ENCODE measurements at regions of chr12 and their contacts with region 1.

Region 1: DNA sequence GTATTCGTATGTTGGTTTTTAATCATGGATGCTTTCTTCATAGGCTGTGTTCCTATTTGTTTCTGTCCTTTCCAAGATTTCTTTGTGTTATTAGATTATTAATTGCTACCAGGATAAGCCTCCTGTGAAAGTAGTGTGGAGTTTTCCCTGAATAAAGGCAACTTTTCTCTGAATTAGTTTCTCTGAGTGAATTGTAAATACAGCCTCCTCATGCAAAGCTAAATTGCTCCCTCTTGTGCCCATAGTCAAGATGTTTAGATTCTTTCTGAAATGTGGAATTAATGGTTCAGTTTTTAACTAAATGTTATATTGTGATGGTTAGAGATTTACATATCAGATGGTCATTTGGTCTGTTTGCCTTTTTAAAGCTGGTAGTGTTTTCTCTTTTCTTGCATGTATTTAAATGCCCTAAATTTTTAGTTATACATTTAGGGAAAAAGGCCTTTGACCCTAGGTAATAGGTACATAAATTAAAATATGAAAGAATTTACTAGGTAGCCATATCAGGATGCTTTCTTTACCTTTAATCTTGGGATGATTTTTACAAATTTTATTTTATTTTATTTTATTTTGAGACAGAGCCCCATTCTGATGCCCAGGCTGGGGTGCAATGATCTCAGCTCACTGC is 8.9 kb downstream of the APAF1 start:
- DNase-seq: peak; percentile 23
- H3K4me3 ChIP-seq: no peak overlapping the region
- H3K27ac ChIP-seq: no peak overlapping the region
- H3K4me1 ChIP-seq: no peaks in the 10 kb centered on the region
- H3K27me3 ChIP-seq: no peaks in the 10 kb centered on the region
- CTCF ChIP-seq: peak; percentile 31 to 64

Region 2: DNA sequence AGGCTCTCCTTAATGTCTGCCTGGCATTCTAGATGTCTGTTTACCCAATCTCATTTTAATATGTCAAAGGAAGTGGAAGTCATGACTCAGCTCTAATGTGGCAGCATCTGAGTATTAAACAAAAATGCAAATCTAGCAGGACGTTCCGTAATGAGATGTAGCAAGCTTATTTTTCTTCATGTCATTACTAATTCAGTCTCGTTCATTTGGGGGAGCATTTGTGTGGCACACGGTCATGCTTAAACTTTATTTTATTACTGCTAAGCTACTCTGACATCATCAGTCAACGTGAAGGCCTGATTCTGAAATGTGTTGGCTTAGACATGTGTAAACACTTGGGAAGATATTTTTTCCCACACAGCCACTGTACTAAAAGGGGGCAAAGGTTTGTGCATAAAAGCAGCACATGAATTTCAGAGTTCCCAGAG is 465.3 kb before region 1 on chr12:
- CTCF ChIA-PET with region 1: no interaction called
- dilution Hi-C with region 1: no loop called
- in situ Hi-C with region 1: no loop called
- intact Hi-C with region 1: no loop called
- DNase-seq: no peak
- H3K4me3 ChIP-seq: no peak overlapping the region
- H3K27ac ChIP-seq: no peak overlapping the region
- H3K4me1 ChIP-seq: no peaks in the 10 kb centered on the region
- H3K27me3 ChIP-seq: no peaks in the 10 kb centered on the region
- CTCF ChIP-seq: no peak

Region 3: GRCh38 chr12:98572010-98572409 is 82.0 kb before region 1 on chr12:
- CTCF ChIA-PET with region 1: no interaction called
- dilution Hi-C with region 1: no loop called
- in situ Hi-C with region 1: no loop called
- intact Hi-C with region 1: loop called (anchors 1 kb)
- DNase-seq: no peak
- H3K4me3 ChIP-seq: no peak overlapping the region
- H3K27ac ChIP-seq: no peak overlapping the region
- H3K4me1 ChIP-seq: peaks cover 4% of the 10 kb centered on the region
- H3K27me3 ChIP-seq: no peaks in the 10 kb centered on the region
- CTCF ChIP-seq: peak in 1 of 2 donors; percentile 24

Region 4: DNA sequence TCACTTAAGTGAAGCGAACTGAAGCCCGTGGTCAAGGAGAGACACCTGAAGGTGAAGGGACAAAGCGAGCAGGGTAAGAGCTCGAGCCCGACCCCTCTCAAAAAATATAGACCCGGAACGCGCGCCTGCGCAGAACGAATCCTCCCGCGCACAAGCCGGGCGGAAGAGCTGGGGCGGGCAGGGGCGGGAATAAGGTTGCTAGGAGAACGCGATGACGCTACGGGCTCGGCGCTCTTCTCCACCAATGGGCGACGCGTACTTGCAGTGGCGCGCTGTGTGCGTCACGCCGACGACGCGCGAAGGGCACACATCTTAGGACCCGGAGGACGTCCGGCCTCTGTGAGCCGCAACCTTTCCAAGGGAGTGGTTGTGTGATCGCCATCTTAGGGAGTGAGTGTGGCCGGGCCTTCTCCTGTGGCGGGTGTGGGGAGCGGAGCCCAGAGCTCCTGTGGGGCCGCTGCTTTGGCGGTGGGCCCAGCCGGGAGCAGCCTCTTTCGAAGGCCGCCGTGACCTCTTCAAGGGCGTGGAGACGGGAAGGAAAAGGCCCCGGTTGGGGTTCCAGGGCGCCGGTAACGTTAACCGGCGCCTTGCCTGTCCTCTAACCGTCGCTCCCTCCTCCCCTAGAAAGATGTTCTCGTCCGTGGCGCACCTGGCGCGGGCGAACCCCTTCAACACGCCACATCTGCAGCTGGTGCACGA is 60.5 kb before region 1 on chr12 and contains the start of gene SLC25A3:
- CTCF ChIA-PET with region 1: no interaction called
- dilution Hi-C with region 1: no loop called
- in situ Hi-C with region 1: no loop called
- intact Hi-C with region 1: loop called (anchors 2 kb)
- DNase-seq: peak; percentile 96
- H3K4me3 ChIP-seq: peak within 1 kb of the TSS; percentile 93 to 100 (median 100)
- H3K27ac ChIP-seq: peak within 1 kb of the TSS; percentile 92
- H3K4me1 ChIP-seq: peaks cover 21% of the 10 kb centered on the region
- H3K27me3 ChIP-seq: no peaks in the 10 kb centered on the region
- CTCF ChIP-seq: no peak
- total RNA-seq, gene SLC25A3: 591 to 639 TPM

Region 5: DNA sequence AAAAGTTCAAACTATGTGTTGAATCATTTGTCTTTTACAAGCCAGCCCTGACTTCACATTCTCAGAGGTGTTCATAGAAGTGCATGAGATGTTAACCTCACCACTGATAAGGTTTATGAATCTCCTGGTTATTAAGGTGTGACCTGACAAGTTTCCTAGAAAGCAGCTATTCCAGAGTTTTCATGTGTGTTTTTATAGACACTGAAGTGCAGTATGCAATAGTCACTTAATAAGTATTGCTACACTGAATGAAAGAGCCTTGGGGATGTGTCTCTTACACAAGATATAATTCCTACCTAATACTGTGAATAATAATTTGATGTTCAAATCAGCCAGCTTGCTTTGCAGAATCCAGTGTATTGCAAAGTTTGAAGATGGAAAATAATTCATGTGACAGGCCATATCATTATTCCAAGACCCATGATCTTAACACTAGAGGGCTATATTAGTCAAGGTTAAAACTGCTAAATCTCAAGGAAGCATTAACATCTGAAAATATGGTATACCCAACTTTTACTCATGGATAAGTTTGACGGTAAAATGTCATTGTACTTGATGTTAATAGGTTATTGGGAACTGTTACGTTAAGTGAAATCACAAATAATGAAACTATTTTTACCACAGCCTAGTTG is 47.5 kb before region 1 on chr12:
- CTCF ChIA-PET with region 1: no interaction called
- dilution Hi-C with region 1: no loop called
- in situ Hi-C with region 1: no loop called
- intact Hi-C with region 1: loop called (anchors 1 kb)
- DNase-seq: no peak
- H3K4me3 ChIP-seq: no peak overlapping the region
- H3K27ac ChIP-seq: no peak overlapping the region
- H3K4me1 ChIP-seq: no peaks in the 10 kb centered on the region
- H3K27me3 ChIP-seq: no peaks in the 10 kb centered on the region
- CTCF ChIP-seq: peak in 1 of 2 donors; percentile 15

Region 6: DNA sequence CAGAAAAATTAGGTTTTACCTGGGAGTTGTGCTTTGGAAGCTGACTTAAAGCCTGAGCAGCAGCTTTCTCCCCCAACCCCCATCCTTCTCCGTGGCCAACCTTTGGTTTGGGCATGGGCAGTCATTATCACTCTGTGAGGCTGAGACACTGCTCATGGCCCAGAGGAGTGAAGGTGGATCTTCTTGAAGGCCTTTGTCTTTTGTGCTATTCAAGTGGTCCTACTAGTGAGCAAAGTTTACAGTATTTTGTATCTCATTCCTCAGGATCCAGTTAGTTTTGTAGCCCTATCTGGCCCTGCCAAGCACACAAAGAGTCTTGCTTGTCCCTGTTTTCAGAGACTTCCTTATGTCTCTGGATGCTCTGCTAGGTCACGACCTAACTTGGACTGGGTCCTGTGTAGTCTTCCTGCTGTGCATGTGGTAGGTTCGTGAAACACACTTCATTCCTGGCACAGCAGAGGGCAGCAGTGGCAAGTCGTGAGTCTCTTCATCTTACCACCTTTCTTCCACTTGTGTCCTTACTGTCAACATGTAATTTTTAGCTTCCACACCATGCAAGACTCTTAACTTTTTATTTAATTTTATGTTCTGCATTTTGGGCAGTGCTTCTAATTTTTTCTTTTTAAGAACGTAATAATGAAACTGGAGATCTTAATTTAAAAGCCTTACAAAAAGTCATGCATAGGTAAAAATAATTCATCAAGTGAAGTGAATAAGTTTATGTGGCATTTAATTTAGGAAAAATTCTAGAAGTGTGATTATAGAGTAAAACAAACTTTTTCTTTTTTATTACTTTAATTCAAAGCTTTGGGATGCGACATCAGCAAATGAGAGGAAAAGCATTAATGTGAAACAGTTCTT is 44.9 kb after region 1 on chr12:
- CTCF ChIA-PET with region 1: no interaction called
- dilution Hi-C with region 1: no loop called
- in situ Hi-C with region 1: no loop called
- intact Hi-C with region 1: no loop called
- DNase-seq: peak; percentile 44
- H3K4me3 ChIP-seq: no peak overlapping the region
- H3K27ac ChIP-seq: no peak overlapping the region
- H3K4me1 ChIP-seq: no peaks in the 10 kb centered on the region
- H3K27me3 ChIP-seq: no peaks in the 10 kb centered on the region
- CTCF ChIP-seq: peak; percentile 67 to 79

Measured in mammary epithelial cell (primary cell).